Activated CD4-positive, alpha-beta memory T cell treated with anti-CD3 and anti-CD28 coated beads for 36 hours (primary cell): ENCODE measurements at regions of chr7 and their contacts with region 1.

Region 1: DNA sequence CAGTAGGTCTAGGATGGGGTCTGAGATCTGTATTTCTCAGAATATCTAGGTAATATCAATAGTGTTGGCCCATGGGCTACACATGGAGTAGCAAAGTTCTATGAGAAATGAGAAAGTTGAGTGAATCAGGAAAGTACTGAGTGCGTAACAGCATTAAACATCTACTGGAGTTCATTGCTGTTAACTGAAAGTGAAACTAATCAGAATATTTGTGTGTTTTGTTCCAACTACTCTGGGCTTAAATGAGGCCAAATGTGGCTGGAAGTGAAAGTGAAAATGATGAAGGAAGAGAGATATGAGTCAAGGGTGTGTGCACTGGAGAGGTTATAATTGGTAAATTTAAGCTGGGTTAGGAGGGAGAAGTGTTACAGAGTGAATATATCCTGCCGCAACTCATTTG is 46.5 kb downstream of the TMEM106B start:
- DNase-seq: peak; percentile 24
- H3K4me3 Mint-ChIP-seq: no peak overlapping the region
- H3K27ac Mint-ChIP-seq: no peak overlapping the region
- H3K4me1 Mint-ChIP-seq: peaks cover 8% of the 10 kb centered on the region
- H3K27me3 Mint-ChIP-seq: no peaks in the 10 kb centered on the region

Region 2: GRCh38 chr7:12067141-12067831 is 190.3 kb before region 1 on chr7:
- CTCF ChIA-PET with region 1: no interaction called
- POLR2A ChIA-PET with region 1: no interaction called
- intact Hi-C with region 1: loop called (anchors 1 kb)
- DNase-seq: peak; percentile 62
- H3K4me3 Mint-ChIP-seq: no peak overlapping the region
- H3K27ac Mint-ChIP-seq: no peak overlapping the region
- H3K4me1 Mint-ChIP-seq: peaks cover 14% of the 10 kb centered on the region
- H3K27me3 Mint-ChIP-seq: no peaks in the 10 kb centered on the region

Region 3: GRCh38 chr7:12211054-12211710 is 46.4 kb before region 1 on chr7 and contains the start of gene TMEM106B:
- CTCF ChIA-PET with region 1: interaction called, 4 read pairs
- POLR2A ChIA-PET with region 1: interaction called, 11 read pairs
- intact Hi-C with region 1: loop called (anchors 1 kb)
- DNase-seq: peak; percentile 98
- H3K4me3 Mint-ChIP-seq: peak within 1 kb of the TSS; percentile 97
- H3K27ac Mint-ChIP-seq: peak within 1 kb of the TSS; percentile 91
- H3K4me1 Mint-ChIP-seq: peaks cover 28% of the 10 kb centered on the region
- H3K27me3 Mint-ChIP-seq: no peaks in the 10 kb centered on the region
- total RNA-seq, gene TMEM106B: 25.5 to 26.2 TPM

Region 4: DNA sequence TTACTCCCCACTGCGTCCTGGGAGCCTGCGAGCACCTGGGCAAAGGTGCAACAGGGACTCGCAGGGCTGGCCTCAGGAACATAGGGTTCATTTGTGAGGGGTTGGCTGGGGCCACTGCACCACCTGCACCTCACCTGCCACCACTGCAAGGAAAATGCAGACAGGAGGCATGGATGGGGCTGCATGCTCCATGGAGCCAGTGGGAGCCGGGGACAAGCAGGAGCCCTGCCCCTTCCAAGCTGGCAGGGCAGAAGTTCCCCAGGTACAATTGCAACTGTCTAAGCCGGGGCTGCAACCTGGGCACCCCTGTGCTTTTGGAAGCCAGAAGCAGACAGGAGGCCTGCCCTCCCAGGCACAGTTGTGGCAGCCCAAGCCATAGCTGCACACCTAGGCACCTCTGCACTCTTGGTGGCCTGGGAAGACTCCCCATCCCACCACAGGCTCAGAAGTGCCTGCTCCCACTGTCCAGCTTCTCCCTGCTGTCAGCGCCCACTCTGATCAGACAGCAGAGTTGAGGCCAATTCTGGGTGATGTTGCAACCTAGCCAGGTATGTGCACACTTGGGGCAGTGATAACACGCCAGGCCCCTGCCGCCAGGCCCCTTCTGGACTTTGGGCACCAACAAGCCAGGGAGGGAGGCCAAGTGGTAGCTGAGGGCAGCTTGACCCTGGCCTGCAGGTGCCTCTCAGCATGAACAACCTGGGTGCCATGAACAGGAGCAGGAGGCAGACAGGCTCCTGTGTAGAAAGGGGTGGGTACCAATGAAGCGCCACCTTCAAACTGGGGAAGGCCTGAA is 11.7 kb after region 1 on chr7:
- CTCF ChIA-PET with region 1: no interaction called
- POLR2A ChIA-PET with region 1: no interaction called
- intact Hi-C with region 1: no loop called
- DNase-seq: no peak
- H3K4me3 Mint-ChIP-seq: no peak overlapping the region
- H3K27ac Mint-ChIP-seq: no peak overlapping the region
- H3K4me1 Mint-ChIP-seq: no peaks in the 10 kb centered on the region
- H3K27me3 Mint-ChIP-seq: peaks cover 1% of the 10 kb centered on the region

Region 5: GRCh38 chr7:12281038-12281437 is 23.5 kb after region 1 on chr7:
- CTCF ChIA-PET with region 1: no interaction called
- POLR2A ChIA-PET with region 1: no interaction called
- intact Hi-C with region 1: loop called (anchors 2 kb)
- DNase-seq: no peak
- H3K4me3 Mint-ChIP-seq: no peak overlapping the region
- H3K27ac Mint-ChIP-seq: no peak overlapping the region
- H3K4me1 Mint-ChIP-seq: peaks cover 1% of the 10 kb centered on the region
- H3K27me3 Mint-ChIP-seq: no peaks in the 10 kb centered on the region

Region 6: GRCh38 chr7:12322284-12322902 is 64.8 kb after region 1 on chr7:
- CTCF ChIA-PET with region 1: no interaction called
- POLR2A ChIA-PET with region 1: no interaction called
- intact Hi-C with region 1: loop called (anchors 2 kb)
- DNase-seq: no peak
- H3K4me3 Mint-ChIP-seq: no peak overlapping the region
- H3K27ac Mint-ChIP-seq: no peak overlapping the region
- H3K4me1 Mint-ChIP-seq: no peaks in the 10 kb centered on the region
- H3K27me3 Mint-ChIP-seq: no peaks in the 10 kb centered on the region